MCF 10A (cell line): ENCODE measurements at regions of chr1 and their contacts with region 1.

Region 1: DNA sequence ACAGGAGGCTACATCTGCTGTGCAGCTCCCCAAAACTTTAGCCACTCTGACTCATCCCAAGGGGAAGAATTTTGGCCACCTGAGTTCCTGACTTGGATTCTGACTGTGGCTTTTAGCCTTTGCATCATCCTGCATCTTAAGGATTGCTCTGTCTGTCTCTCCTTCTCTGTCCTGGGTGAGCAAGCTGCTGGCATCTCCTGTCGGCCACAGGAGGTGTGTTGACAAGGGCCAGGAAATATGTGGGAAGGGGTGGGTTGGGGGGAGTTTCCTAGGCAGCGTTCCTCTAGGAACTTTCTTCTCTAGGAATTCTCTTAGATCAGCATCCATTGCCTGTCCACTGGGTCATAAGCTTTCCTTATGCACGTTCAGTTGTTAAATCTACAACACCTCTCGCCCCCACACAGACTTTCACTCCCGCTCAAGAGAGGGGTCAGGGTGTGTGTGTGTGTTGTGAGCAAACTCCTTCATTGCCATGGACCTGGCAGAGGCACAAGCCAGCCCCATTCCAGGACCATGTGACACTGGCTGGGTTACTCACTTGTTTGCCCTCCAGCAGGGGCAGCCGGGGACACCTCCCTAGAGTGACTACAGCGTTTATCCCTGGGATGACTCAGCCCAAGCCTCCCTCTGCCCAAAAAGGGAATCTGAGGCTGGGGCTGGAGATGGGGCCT is 145.0 kb upstream of the DUSP10 start:
- DNase-seq: peak; percentile 99
- H3K4me3 Mint-ChIP-seq: peak overlapping the region; percentile 55
- H3K27ac Mint-ChIP-seq: peak overlapping the region; percentile 85
- H3K4me1 Mint-ChIP-seq: peaks cover 60% of the 10 kb centered on the region
- H3K27me3 Mint-ChIP-seq: no peaks in the 10 kb centered on the region
- CTCF ChIP-seq: peak; percentile 11

Region 2: GRCh38 chr1:221801773-221802516 is 84.9 kb before region 1 on chr1:
- CTCF ChIA-PET with region 1: interaction called, 4 read pairs
- POLR2A ChIA-PET with region 1: interaction called, 3 read pairs
- intact Hi-C with region 1: loop called (anchors 5 kb)
- DNase-seq: peak; percentile 87
- H3K4me3 Mint-ChIP-seq: no peak overlapping the region
- H3K27ac Mint-ChIP-seq: peak overlapping the region; percentile 63
- H3K4me1 Mint-ChIP-seq: peaks cover 18% of the 10 kb centered on the region
- H3K27me3 Mint-ChIP-seq: no peaks in the 10 kb centered on the region
- CTCF ChIP-seq: no peak

Region 3: GRCh38 chr1:221845650-221846371 is 41.1 kb before region 1 on chr1:
- CTCF ChIA-PET with region 1: interaction called, 11 read pairs
- POLR2A ChIA-PET with region 1: interaction called, 38 read pairs
- intact Hi-C with region 1: no loop called
- DNase-seq: peak; percentile 97
- H3K4me3 Mint-ChIP-seq: no peak overlapping the region
- H3K27ac Mint-ChIP-seq: peak overlapping the region; percentile 78
- H3K4me1 Mint-ChIP-seq: peaks cover 28% of the 10 kb centered on the region
- H3K27me3 Mint-ChIP-seq: no peaks in the 10 kb centered on the region
- CTCF ChIP-seq: no peak

Region 4: GRCh38 chr1:221897321-221897721 is 10.4 kb after region 1 on chr1:
- CTCF ChIA-PET with region 1: interaction called, 9 read pairs
- POLR2A ChIA-PET with region 1: interaction called, 19 read pairs
- intact Hi-C with region 1: no loop called
- DNase-seq: peak; percentile 87
- H3K4me3 Mint-ChIP-seq: no peak overlapping the region
- H3K27ac Mint-ChIP-seq: no peak overlapping the region
- H3K4me1 Mint-ChIP-seq: peaks cover 21% of the 10 kb centered on the region
- H3K27me3 Mint-ChIP-seq: no peaks in the 10 kb centered on the region
- CTCF ChIP-seq: no peak

Region 5: DNA sequence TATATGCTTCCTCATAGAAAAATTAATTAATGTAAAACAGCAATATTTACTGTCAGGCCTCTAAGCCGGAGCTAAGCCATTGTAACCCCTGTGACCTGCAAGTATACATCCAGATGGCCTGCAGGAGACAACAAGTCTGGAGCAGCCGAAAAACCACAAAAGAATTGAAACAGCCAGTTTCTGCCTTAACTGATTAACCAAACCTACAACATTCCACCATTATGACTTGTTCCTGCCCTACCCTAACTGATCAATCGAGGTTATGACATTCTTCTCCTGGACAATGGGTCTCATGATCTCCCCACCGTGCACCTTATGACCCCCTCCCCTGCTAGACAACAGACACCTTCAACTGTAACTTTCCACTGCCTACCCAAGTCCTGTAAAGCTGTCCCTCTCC is 60.9 kb after region 1 on chr1:
- CTCF ChIA-PET with region 1: no interaction called
- POLR2A ChIA-PET with region 1: no interaction called
- intact Hi-C with region 1: no loop called
- DNase-seq: no peak
- H3K4me3 Mint-ChIP-seq: no peak overlapping the region
- H3K27ac Mint-ChIP-seq: no peak overlapping the region
- H3K4me1 Mint-ChIP-seq: peaks cover 5% of the 10 kb centered on the region
- H3K27me3 Mint-ChIP-seq: no peaks in the 10 kb centered on the region
- CTCF ChIP-seq: no peak

Region 6: DNA sequence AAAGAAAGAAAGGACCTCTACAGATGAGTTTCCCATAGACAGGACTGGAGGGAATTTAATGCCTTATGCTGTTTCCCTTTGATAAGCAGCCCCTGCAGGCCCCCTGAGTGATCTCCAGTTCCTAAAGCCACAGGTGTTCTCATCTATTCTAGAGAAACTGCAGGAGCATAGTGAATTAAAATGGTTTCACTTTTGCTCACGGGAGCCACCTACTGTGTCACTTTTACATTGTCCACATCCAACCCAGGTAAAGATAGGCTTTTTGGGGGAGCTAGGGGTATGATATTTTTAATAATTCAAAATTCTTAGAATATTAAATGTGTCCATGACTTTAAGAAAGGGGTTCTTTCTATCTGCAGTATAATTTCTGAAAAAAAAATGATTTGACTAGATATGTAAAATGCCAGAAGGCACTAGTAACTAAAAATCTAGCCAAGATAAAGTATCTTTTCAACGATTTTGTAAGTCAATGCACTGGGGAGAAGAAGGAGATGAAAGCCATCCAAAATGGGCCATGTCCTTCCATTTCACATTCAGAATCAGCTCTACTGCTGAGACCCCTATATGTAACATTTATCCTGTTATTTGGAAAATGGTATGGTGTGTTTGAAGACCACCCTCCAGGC is 122.3 kb after region 1 on chr1:
- CTCF ChIA-PET with region 1: interaction called, 15 read pairs
- POLR2A ChIA-PET with region 1: interaction called, 7 read pairs
- intact Hi-C with region 1: no loop called
- DNase-seq: peak; percentile 77
- H3K4me3 Mint-ChIP-seq: no peak overlapping the region
- H3K27ac Mint-ChIP-seq: peak overlapping the region; percentile 24
- H3K4me1 Mint-ChIP-seq: no peaks in the 10 kb centered on the region
- H3K27me3 Mint-ChIP-seq: no peaks in the 10 kb centered on the region
- CTCF ChIP-seq: peak; percentile 86